GM10248 (cell line): ENCODE measurements at regions of chr14 and their contacts with region 1.

Region 1: GRCh38 chr14:101947906-101948665 is 16.3 kb upstream of the DYNC1H1 start:
- DNase-seq: peak; percentile 100
- CTCF ChIP-seq: no peak

Region 2: DNA sequence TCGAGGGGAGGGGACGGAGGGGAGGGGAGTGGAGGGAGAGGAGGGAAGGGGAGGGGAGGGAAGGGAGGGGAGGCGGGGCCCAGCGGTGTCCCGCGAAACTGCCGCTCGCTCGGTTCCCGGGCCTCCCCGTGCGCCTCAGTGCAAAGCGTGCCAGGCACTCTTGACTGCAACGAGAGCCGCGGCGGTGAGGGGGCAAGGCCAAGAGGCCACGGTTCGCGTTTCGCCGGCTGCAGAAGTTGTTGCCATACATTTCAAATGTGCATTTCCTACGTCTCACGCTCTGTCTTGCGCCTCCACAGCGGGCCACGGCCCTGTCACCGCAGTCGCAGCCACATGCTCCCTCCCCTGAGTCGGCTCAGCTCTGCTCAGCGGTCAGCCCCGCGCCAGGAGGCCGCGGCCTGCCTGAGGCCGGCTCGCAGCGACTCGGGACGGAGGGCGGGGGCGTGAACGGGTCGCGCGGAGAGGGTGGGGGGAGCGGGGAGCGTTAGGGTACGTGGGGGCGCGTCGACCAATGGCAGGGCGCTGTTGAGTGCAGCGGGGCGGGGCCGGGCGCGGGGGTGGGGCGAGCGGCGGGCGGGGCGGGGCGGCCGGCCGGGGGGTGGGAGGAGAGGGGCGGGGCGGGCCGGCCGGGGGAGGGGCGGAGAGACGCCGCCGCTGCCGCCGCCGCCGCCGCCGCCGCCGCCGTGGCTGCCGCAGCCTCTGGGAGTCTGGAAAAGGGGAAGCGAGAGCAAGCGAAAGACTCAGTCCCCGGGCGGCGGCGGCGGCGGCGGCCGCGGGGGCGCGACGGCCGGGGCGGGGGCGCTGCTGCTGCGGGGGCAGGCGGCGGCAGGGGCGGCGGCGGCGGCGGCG is 186.8 kb before region 1 on chr14 and contains the start of gene PPP2R5C:
- CTCF ChIA-PET with region 1: no interaction called
- POLR2A ChIA-PET with region 1: interaction called, 12 read pairs
- DNase-seq: peak; percentile 94
- CTCF ChIP-seq: no peak

Region 3: DNA sequence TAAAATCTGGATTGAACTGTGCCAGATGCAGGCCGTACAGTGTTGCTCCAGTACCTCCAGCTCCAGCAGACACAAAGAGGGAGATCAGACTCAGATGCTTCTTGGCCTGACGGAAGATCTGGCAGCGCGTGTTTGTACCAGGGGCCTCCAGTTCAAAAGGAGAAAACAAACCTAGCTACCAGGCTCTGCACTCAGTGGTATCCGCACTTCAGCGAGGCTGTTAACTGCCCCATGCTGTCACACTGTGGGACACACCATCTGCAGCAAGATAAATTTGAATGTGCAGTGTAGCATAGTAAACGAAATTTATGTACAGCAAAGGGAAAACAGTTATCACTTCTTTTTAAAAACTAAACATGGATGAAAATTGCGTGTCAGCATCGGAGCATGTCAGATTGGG is 21.4 kb after region 1 on chr14:
- CTCF ChIA-PET with region 1: no interaction called
- POLR2A ChIA-PET with region 1: no interaction called
- DNase-seq: no peak
- CTCF ChIP-seq: no peak